ENCODE measurements at regions of chr11 and their contacts with region 1.

Region 1: DNA sequence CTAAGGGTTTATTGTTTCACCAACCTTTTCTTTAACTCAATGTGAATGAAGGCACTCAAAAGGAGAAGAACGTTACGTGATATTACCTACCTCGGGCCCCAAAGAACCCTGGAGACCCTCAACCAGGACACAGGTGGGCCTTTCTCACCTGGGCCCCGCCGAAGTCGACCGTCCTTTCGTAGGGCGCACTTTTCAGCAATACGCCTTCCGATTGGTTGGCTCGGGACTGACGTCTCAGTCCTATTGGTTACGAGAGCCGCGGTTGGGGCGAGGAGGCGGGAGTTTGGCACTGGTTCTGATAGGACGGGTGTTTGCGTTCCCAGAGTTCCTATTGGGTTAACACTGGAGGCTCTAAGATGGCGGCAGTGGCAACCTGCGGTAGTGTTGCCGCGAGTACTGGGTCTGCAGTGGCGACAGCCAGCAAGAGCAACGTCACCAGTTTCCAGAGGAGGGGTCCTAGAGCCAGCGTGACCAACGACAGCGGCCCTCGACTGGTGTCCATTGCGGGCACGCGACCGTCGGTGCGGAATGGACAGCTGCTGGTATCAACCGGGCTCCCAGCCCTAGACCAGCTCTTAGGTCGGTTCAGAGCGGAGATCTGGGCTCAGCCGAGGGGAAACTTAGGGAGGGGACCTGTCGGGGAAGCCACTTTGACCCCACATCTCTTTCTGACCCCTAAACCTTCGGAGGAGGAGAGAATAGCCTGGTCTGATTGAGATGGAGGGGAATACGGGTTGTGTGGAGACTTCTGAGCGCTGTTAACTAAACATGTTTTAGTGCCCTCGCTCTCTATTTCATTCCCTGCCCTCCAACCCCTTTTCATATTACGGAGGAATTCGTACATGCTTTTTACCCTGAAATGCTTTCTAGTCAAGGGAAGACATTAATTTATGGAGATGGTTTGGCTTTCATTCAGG is at the starts of genes ELP4 and IMMP1L:
- H3K4me3 Mint-ChIP-seq: peak within 1 kb of the TSS; percentile 86
- H3K27ac Mint-ChIP-seq: peak within 1 kb of the TSS; percentile 90
- H3K4me1 Mint-ChIP-seq: peaks cover 5% of the 10 kb centered on the region
- H3K27me3 Mint-ChIP-seq: no peaks in the 10 kb centered on the region

Region 2: GRCh38 chr11:31810779-31811647 is 301.3 kb after region 1 on chr11 and contains the start of gene PAX6:
- intact Hi-C with region 1: loop called (anchors 10 kb)
- H3K4me3 Mint-ChIP-seq: peak within 1 kb of the TSS; percentile 73
- H3K27ac Mint-ChIP-seq: peak within 1 kb of the TSS; percentile 28
- H3K4me1 Mint-ChIP-seq: peaks cover 49% of the 10 kb centered on the region
- H3K27me3 Mint-ChIP-seq: peaks cover 95% of the 10 kb centered on the region